Body of pancreas (tissue), 4 donors: ENCODE measurements at regions of chr6 and their contacts with region 1.

Region 1: DNA sequence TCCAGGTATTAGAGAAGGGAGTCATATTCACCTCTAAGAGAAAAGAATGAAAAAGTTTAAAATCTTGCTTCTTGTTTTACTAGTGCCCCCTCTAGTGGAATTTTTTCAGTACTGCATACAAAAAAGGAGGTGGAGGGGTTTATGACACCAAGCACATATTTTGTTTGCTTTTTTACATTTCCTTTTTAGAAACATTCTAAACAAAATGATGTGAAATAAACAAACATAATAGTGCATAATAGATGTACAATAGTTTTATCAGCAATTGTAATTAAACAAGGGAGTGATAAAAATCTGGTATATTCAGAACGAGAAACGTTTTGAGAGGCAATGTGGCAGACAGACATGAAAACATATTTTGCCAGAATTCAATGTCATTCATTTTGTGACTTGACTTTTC is 111.0 kb upstream of the TFAP2D start:
- DNase-seq: no peak
- ATAC-seq: no peak
- H3K4me3 ChIP-seq: no peak overlapping the region
- H3K27ac ChIP-seq: no peak overlapping the region
- H3K4me1 ChIP-seq: no peaks in the 10 kb centered on the region
- H3K27me3 ChIP-seq: no peaks in the 10 kb centered on the region
- CTCF ChIP-seq: peak; percentile 9 to 96 (median 56)
- POLR2A ChIP-seq: no peak

Region 2: DNA sequence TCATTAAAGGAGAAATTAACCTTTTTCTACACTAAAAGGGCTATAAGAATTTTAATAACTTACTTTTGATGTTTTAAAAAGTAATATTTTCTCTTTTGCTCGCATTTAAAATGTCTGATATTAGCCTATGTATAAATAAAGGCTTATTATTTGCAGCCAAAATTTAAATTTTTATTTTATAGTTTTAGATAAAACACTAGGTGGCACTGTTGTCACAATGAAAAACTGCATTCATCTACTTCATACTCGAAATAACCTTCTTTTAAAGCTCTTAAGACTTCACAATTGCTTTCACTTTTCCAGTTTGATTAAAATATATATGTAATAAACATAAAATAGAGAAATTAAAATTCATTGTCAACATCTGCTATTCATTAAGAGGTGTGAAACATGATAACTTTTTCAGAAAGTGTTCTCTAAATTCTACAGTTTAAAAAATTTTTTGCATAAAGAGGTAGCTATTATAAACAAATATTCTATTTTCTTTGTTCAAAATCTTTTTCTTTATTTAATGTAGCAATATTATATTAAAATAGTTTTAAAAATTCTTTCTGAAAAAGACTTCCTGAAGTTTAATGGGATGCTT is 473.8 kb before region 1 on chr6:
- intact Hi-C with region 1: loop called (anchors 10 kb)
- DNase-seq: no peak
- ATAC-seq: no peak
- H3K4me3 ChIP-seq: no peak overlapping the region
- H3K27ac ChIP-seq: no peak overlapping the region
- H3K4me1 ChIP-seq: no peaks in the 10 kb centered on the region
- H3K27me3 ChIP-seq: no peaks in the 10 kb centered on the region
- CTCF ChIP-seq: peak; percentile 16 to 48 (median 39)
- POLR2A ChIP-seq: no peak

Region 3: GRCh38 chr6:50278663-50279062 is 323.6 kb before region 1 on chr6:
- intact Hi-C with region 1: no loop called
- DNase-seq: no peak
- ATAC-seq: no peak
- H3K4me3 ChIP-seq: no peak overlapping the region
- H3K27ac ChIP-seq: no peak overlapping the region
- H3K4me1 ChIP-seq: no peaks in the 10 kb centered on the region
- H3K27me3 ChIP-seq: no peaks in the 10 kb centered on the region
- CTCF ChIP-seq: no peak
- POLR2A ChIP-seq: no peak

Region 4: DNA sequence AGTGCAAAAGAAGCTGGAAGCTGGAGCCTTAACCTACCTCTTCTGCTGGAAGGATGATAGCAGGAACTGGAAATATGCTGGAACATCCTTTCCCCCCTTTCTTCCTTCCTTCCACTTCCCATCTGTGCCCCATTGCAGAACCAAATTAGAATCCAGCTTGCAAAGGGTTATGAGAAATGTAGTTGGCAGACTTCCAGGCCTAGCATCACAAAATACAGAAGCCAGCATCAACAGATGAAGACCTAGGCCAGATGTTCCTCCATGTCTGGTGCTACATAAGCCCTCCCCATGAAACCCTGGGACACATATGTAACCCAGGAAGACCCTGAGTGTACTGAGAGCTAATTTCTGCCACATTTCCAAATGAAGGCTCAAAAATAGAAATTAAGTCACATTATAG is 176.4 kb after region 1 on chr6:
- intact Hi-C with region 1: no loop called
- DNase-seq: no peak
- ATAC-seq: no peak
- H3K4me3 ChIP-seq: no peak overlapping the region
- H3K27ac ChIP-seq: no peak overlapping the region
- H3K4me1 ChIP-seq: no peaks in the 10 kb centered on the region
- H3K27me3 ChIP-seq: no peaks in the 10 kb centered on the region
- CTCF ChIP-seq: no peak
- POLR2A ChIP-seq: no peak